Calu3 (cell line): ENCODE measurements at regions of chr5 and their contacts with region 1.

Region 1: GRCh38 chr5:174327317-174328236 is 282.1 kb downstream of the NSG2 start:
- DNase-seq: peak; percentile 92
- H3K4me3 Mint-ChIP-seq: no peak overlapping the region
- H3K27ac Mint-ChIP-seq: peak overlapping the region; percentile 24
- H3K4me1 Mint-ChIP-seq: peaks cover 33% of the 10 kb centered on the region
- H3K27me3 Mint-ChIP-seq: peaks cover 69% of the 10 kb centered on the region
- CTCF ChIP-seq: peak; percentile 95

Region 2: GRCh38 chr5:174259696-174260420 is 67.7 kb before region 1 on chr5:
- CTCF ChIA-PET with region 1: no interaction called
- intact Hi-C with region 1: no loop called
- DNase-seq: no peak
- H3K4me3 Mint-ChIP-seq: no peak overlapping the region
- H3K27ac Mint-ChIP-seq: no peak overlapping the region
- H3K4me1 Mint-ChIP-seq: no peaks in the 10 kb centered on the region
- H3K27me3 Mint-ChIP-seq: peaks cover 56% of the 10 kb centered on the region
- CTCF ChIP-seq: no peak

Region 3: DNA sequence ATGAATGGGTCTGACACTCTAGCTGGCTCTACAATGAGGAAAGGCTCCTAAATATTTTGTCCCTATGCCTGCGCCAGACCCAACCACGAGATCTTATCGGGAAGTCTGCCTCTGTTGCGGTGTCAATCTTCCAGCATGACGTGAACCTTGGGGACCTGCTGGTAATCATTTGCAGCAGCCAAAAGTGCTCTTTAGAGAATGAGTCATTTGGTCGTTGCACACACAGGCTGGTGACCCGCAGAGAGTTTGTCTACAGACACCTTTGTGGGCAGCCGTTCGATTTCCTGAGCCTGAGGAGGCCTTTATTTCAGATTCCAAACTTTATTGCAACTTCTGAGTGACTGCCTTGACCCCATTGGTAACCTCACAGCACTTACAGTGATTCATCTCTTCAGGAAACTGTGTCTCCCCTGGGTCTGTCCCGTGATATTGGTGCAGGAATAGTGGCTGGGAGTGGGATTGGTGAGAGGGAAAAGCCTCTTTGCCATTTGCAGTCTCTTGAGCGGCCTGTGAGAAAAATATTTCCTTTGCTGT is 44.1 kb after region 1 on chr5:
- CTCF ChIA-PET with region 1: interaction called, 3 read pairs
- intact Hi-C with region 1: loop called (anchors 5 kb)
- DNase-seq: peak; percentile 87
- H3K4me3 Mint-ChIP-seq: peak overlapping the region; percentile 9
- H3K27ac Mint-ChIP-seq: peak overlapping the region; percentile 39
- H3K4me1 Mint-ChIP-seq: peaks cover 33% of the 10 kb centered on the region
- H3K27me3 Mint-ChIP-seq: no peaks in the 10 kb centered on the region
- CTCF ChIP-seq: no peak

Region 4: DNA sequence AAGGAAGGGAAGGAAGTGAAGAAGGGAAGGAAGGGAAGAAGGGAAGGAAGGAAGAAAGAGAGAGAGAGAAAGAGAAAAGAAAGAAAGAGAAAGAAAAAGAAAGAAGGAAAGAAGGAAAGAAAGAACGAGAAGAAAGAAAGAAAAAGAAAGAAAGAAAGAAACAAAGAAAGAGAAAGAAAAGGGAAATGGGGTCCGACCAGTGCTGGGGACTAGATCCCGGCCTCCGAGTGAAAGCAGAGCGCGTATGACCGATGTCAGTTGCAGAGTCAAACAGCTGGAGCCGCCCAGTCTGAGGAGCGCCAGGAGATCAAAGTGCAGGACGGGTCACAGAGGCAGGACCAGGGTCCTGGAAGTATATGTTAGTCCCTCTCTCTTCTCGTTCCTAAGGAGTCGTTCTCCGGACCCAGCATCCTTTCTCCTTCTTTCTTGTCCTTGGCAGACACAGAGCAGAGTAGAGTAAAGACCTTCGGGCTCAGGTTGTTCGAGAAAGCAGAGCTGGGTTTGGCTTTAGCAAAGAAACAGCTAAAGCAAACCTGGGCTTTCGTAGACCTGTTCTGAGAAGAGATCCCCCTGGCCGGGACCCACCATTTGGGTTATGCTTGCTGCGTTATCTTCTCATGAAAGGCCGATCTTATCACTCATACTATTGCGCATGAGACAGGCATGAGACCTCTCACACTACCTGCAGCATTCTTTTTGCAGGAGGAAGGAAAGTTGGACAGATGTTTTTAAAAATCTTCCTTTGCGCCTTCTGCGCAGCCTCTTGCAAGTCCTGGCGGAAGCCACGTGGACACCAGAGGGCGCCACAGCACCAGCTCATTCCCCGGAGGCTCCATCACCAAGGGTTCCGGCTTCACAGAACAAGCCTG is 91.6 kb after region 1 on chr5:
- CTCF ChIA-PET with region 1: interaction called, 17 read pairs
- intact Hi-C with region 1: loop called (anchors 1 kb)
- DNase-seq: peak; percentile 96
- H3K4me3 Mint-ChIP-seq: peak overlapping the region; percentile 68
- H3K27ac Mint-ChIP-seq: peak overlapping the region; percentile 22
- H3K4me1 Mint-ChIP-seq: peaks cover 25% of the 10 kb centered on the region
- H3K27me3 Mint-ChIP-seq: no peaks in the 10 kb centered on the region
- CTCF ChIP-seq: peak; percentile 97

Region 5: GRCh38 chr5:174581479-174581878 is 253.9 kb after region 1 on chr5:
- CTCF ChIA-PET with region 1: no interaction called
- intact Hi-C with region 1: loop called (anchors 2 kb)
- DNase-seq: peak; percentile 69
- H3K4me3 Mint-ChIP-seq: no peak overlapping the region
- H3K27ac Mint-ChIP-seq: no peak overlapping the region
- H3K4me1 Mint-ChIP-seq: peaks cover 8% of the 10 kb centered on the region
- H3K27me3 Mint-ChIP-seq: no peaks in the 10 kb centered on the region
- CTCF ChIP-seq: peak; percentile 35

Region 6: GRCh38 chr5:174735498-174736330 is 408.1 kb after region 1 on chr5:
- CTCF ChIA-PET with region 1: interaction called, 3 read pairs
- intact Hi-C with region 1: loop called (anchors 1 kb)
- DNase-seq: peak; percentile 83
- H3K4me3 Mint-ChIP-seq: peak overlapping the region; percentile 84
- H3K27ac Mint-ChIP-seq: no peak overlapping the region
- H3K4me1 Mint-ChIP-seq: peaks cover 14% of the 10 kb centered on the region
- H3K27me3 Mint-ChIP-seq: peaks cover 27% of the 10 kb centered on the region
- CTCF ChIP-seq: peak; percentile 68

Region 7: DNA sequence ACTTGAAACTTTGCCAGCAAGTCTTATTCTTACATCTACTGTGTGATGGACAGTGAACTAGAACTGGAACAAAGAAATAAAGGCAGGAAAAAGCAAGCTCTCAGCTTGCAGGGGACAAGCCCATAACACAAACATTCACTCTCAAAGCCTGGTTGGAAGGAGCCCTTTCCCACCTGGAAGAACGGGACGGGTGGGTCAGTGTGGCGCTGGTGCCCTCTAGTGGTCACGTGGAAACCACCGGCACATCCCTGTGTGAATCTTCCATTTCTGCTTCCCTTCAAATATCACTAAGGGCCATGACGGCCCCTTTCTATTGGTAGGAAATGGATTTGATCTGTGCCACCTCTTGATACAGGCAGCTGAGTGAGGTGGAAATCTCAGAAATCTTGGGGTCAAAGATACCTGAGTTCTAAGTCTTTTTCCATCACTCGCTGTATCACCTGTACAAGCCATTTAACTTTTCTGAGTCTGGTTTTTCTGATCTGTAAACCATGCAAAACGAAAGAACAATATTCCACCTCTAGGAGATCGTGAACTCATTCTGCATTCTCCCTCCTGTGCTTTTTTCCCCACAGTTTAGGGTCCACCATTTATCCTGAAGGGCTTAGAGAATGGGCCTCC is 608.4 kb after region 1 on chr5:
- CTCF ChIA-PET with region 1: no interaction called
- intact Hi-C with region 1: loop called (anchors 1 kb)
- DNase-seq: peak; percentile 82
- H3K4me3 Mint-ChIP-seq: no peak overlapping the region
- H3K27ac Mint-ChIP-seq: no peak overlapping the region
- H3K4me1 Mint-ChIP-seq: no peaks in the 10 kb centered on the region
- H3K27me3 Mint-ChIP-seq: peaks cover 37% of the 10 kb centered on the region
- CTCF ChIP-seq: peak; percentile 89